Sigmoid colon (tissue), 7 donors: ENCODE measurements at regions of chr9 and their contacts with region 1.

Region 1: GRCh38 chr9:20622330-20623020 is at the start of gene MLLT3:
- DNase-seq: peak; percentile 98
- H3K4me3 ChIP-seq: peak within 1 kb of the TSS; percentile 86 to 97 (median 92)
- H3K27ac ChIP-seq: peak within 1 kb of the TSS; percentile 93 to 95 (median 94)
- H3K4me1 ChIP-seq: peaks cover 0 to 40% (median 30%) of the 10 kb centered on the region in 4 donors
- H3K27me3 ChIP-seq: no peaks in the 10 kb centered on the region
- CTCF ChIP-seq: no peak
- EP300 ChIP-seq: no peak
- POLR2A ChIP-seq: peak; percentile 69 to 76
- total RNA-seq, gene MLLT3: 19.0 to 27.1 (median 24.2) TPM

Region 2: GRCh38 chr9:19925817-19926503 is 696.5 kb before region 1 on chr9:
- intact Hi-C with region 1: loop called (anchors 5 kb)
- DNase-seq: peak; percentile 83
- H3K4me3 ChIP-seq: peak overlapping the region; percentile 32 to 49 (median 36)
- H3K27ac ChIP-seq: peak overlapping the region in 1 of 4 donors; percentile 38
- H3K4me1 ChIP-seq: peaks cover 0 to 12% (median 5%) of the 10 kb centered on the region in 4 donors
- H3K27me3 ChIP-seq: no peaks in the 10 kb centered on the region
- CTCF ChIP-seq: peak; percentile 82 to 96 (median 90)
- EP300 ChIP-seq: no peak
- POLR2A ChIP-seq: no peak

Region 3: GRCh38 chr9:20479419-20480155 is 142.9 kb before region 1 on chr9:
- intact Hi-C with region 1: loop called (anchors 10 kb)
- DNase-seq: no peak
- H3K4me3 ChIP-seq: no peak overlapping the region
- H3K27ac ChIP-seq: no peak overlapping the region
- H3K4me1 ChIP-seq: peaks cover 0 to 35% (median 28%) of the 10 kb centered on the region in 4 donors
- H3K27me3 ChIP-seq: no peaks in the 10 kb centered on the region
- CTCF ChIP-seq: no peak
- EP300 ChIP-seq: no peak
- POLR2A ChIP-seq: no peak

Region 4: GRCh38 chr9:20684035-20684872 is 61.8 kb after region 1 on chr9 and contains the start of gene FOCAD:
- intact Hi-C with region 1: loop called (anchors 2 kb)
- DNase-seq: peak; percentile 97
- H3K4me3 ChIP-seq: peak within 1 kb of the TSS; percentile 56 to 85 (median 81)
- H3K27ac ChIP-seq: peak within 1 kb of the TSS; percentile 88 to 95 (median 92)
- H3K4me1 ChIP-seq: peaks cover 0 to 24% (median 15%) of the 10 kb centered on the region in 4 donors
- H3K27me3 ChIP-seq: no peaks in the 10 kb centered on the region
- CTCF ChIP-seq: no peak
- EP300 ChIP-seq: no peak
- POLR2A ChIP-seq: peak; percentile 43
- total RNA-seq, gene FOCAD: 25.5 to 51.5 (median 34.0) TPM

Region 5: DNA sequence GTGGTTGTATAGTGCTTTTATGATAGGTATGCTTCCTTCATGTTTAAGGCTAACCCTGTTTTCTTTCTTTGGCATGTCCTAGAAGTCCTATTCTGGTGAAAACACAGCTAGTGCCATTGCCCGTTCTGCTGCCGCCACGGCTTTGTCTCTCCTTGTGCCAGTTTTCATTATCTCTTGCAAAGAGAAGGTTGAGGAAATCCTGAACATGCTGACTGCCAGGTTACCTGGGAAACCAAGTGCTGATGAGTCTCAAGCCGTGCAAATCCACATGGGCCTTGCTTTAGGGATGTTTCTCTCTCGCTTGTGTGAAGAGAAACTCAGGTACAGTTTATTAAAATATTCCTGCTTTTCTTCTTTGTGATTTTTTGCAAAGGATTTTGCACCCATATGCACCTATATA is 306.8 kb after region 1 on chr9:
- intact Hi-C with region 1: loop called (anchors 5 kb)
- DNase-seq: no peak
- H3K4me3 ChIP-seq: no peak overlapping the region
- H3K27ac ChIP-seq: no peak overlapping the region
- H3K4me1 ChIP-seq: no peaks in the 10 kb centered on the region
- H3K27me3 ChIP-seq: no peaks in the 10 kb centered on the region
- CTCF ChIP-seq: no peak
- EP300 ChIP-seq: no peak
- POLR2A ChIP-seq: no peak

Region 6: GRCh38 chr9:21028466-21028865 is 406.0 kb after region 1 on chr9:
- intact Hi-C with region 1: loop called (anchors 10 kb)
- DNase-seq: no peak
- H3K4me3 ChIP-seq: no peak overlapping the region
- H3K27ac ChIP-seq: peak overlapping the region; percentile 44 to 91 (median 88)
- H3K4me1 ChIP-seq: peaks cover 0 to 36% (median 25%) of the 10 kb centered on the region in 4 donors
- H3K27me3 ChIP-seq: no peaks in the 10 kb centered on the region
- CTCF ChIP-seq: no peak
- EP300 ChIP-seq: no peak
- POLR2A ChIP-seq: no peak

Region 7: GRCh38 chr9:21110708-21111576 is 488.5 kb after region 1 on chr9:
- intact Hi-C with region 1: loop called (anchors 2 kb)
- DNase-seq: no peak
- H3K4me3 ChIP-seq: no peak overlapping the region
- H3K27ac ChIP-seq: no peak overlapping the region
- H3K4me1 ChIP-seq: no peaks in the 10 kb centered on the region
- H3K27me3 ChIP-seq: no peaks in the 10 kb centered on the region
- CTCF ChIP-seq: peak; percentile 43 to 84 (median 68)
- EP300 ChIP-seq: no peak
- POLR2A ChIP-seq: no peak